Activated T-helper 2 cell treated with anti-CD3 and anti-CD28 coated beads, Interferon-gamma antibody, Interleukin-2, Interleukin-4, amounts not matched to agents 10 μg/mL and 5 μg/mL and 100 μg/mL, durations not matched to agents 14 hours and 24 hours and 36 hours (primary cell): ENCODE measurements at regions of chr2 and their contacts with region 1.

Region 1: DNA sequence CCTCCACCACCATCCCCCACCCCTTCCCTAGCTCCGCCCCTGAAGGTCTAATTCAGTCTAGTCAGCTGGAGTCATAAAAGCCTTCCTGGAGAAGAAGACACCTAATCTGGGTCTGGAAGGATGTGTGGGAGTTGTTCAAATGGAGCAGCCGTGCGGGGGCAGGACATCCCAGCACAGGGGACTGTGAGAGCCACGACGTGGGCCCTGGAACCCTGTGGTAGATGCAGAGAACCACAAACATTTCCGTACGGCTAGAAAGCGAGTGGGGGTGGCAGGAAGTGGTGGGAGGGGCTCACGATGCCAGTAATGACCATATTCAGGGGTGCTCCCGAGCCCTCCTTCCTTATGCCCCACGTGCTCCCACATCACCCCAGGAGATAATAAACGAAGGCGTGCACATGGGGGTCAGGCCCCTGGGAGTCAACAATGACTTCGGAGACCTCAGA is 20.9 kb upstream of the COL6A3 start:
- DNase-seq: peak; percentile 69
- H3K4me3 Mint-ChIP-seq: peak overlapping the region; percentile 72
- H3K27ac Mint-ChIP-seq: peak overlapping the region; percentile 86
- H3K4me1 Mint-ChIP-seq: peaks cover 81% of the 10 kb centered on the region
- H3K27me3 Mint-ChIP-seq: no peaks in the 10 kb centered on the region

Region 2: DNA sequence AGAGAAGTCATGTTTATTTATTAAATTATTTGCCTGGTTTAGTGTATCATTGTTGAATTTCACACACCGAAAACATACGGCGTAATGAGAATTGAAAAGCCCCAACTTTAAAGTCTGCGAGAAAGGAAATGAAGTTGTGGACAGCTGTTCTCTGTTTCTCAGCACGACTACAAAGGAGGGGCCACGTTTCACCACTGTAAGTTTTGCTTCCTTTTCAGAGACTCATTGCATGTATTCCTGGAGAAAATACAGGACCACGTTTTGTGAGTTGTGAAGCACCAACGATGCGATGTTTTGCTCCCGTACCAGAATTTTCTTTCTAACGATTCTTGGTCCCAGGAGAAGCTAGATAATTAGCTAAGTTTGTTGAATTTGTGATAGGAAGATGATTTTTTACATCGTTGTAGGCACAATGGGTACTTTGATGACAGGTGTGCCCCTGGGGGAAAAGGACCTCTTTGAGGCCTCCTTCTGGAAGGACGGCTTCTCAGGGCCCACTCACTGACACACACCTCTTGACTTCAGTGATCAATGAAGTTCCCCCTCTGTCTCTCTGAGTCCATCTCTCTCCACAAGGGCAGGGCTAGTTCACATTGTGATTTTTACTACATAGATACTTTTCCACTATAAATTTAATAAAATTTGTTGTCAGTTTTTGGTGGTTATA is 888.9 kb before region 1 on chr2:
- intact Hi-C with region 1: loop called (anchors 5 kb)
- DNase-seq: no peak
- H3K4me3 Mint-ChIP-seq: peak overlapping the region; percentile 68
- H3K27ac Mint-ChIP-seq: peak overlapping the region; percentile 93
- H3K4me1 Mint-ChIP-seq: peaks cover 76% of the 10 kb centered on the region
- H3K27me3 Mint-ChIP-seq: no peaks in the 10 kb centered on the region

Region 3: DNA sequence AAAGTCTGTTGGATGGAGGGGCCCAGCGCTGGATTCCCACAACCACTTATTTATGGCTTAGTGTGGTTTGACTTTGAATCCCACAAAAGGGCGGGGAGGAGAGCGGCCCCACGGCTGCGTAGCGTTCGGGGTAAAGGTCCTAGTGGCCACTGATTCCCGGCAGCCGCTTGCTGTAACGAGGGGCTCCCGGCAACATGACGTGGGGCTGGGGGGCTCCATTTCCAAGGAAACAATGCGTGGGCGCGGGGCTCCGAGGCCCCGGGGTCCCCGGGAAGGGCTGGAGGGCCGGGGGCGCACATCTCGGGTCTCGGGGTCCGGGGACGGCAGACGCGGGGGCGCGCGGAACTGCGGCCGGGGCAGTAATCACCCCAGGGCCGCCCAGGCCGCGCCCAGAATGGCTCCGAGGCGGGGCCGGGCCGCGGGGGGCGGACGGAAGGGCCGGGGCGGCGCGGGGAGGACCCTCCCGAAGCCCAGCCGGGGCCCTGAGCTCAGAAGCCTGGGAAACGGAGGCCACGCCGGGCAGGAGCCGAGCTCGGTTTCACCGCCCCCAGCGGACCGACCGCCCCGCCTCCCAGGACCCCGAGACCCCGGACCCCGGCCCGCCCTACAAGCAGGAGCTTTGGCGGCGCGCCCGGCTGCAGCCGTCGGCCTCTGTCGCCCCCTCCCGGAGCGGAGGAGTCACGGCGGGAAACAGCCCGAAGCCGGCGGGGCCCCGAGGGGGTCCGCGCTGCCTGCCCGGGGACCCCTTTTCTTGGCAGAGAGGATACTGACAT is 40.2 kb after region 1 on chr2:
- intact Hi-C with region 1: loop called (anchors 2 kb)
- DNase-seq: peak; percentile 68
- H3K4me3 Mint-ChIP-seq: peak overlapping the region; percentile 84
- H3K27ac Mint-ChIP-seq: peak overlapping the region; percentile 87
- H3K4me1 Mint-ChIP-seq: peaks cover 14% of the 10 kb centered on the region
- H3K27me3 Mint-ChIP-seq: peaks cover 29% of the 10 kb centered on the region

Region 4: DNA sequence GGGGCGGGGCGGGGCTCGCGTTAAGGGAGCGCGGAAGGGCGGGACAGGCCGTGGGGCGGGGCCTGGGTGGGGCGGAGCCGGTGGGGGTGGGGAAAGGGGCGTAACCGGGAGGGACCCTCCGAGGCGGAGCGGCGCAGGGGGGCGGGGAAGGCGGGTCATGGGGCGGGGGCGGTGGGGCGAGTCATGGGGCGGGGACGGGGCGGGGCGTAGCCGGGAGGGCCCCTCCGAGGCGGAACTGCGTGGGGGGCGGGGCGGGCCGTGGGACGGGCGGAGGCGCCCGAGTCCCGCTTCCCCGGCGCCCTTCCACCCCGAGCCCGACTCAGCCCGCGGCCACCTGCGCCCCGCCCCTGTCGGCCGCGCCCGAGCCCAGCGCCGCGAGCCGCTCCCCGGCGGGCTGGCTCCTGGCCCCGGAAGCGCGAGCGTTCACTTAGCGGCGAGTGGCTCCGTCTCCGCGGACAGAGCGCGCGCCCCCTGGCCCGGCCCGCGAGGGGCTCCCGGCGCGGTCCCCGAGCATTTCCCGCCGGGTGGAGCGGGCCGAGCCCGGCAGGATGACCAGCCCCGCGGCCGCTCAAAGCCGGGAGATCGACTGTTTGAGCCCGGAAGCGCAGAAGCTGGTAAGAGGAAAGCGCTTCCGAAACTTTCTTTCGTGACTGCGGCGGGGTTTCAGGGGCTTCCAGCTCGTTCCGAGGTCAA is 257.2 kb after region 1 on chr2:
- intact Hi-C with region 1: loop called (anchors 5 kb)
- DNase-seq: peak; percentile 91
- H3K4me3 Mint-ChIP-seq: peak overlapping the region; percentile 99
- H3K27ac Mint-ChIP-seq: peak overlapping the region; percentile 98
- H3K4me1 Mint-ChIP-seq: peaks cover 59% of the 10 kb centered on the region
- H3K27me3 Mint-ChIP-seq: no peaks in the 10 kb centered on the region